KBM-7 (cell line): ENCODE measurements at regions of chr2 and their contacts with region 1.

Region 1: GRCh38 chr2:134118279-134119116 is 135.4 kb upstream of the MGAT5 start:
- DNase-seq: peak; percentile 91

Region 2: GRCh38 chr2:134431838-134432434 is 313.4 kb after region 1 on chr2:
- in situ Hi-C with region 1: loop called (anchors 10 kb)
- DNase-seq: no peak